ENCODE measurements at regions of chr9 and their contacts with region 1.

Region 1: DNA sequence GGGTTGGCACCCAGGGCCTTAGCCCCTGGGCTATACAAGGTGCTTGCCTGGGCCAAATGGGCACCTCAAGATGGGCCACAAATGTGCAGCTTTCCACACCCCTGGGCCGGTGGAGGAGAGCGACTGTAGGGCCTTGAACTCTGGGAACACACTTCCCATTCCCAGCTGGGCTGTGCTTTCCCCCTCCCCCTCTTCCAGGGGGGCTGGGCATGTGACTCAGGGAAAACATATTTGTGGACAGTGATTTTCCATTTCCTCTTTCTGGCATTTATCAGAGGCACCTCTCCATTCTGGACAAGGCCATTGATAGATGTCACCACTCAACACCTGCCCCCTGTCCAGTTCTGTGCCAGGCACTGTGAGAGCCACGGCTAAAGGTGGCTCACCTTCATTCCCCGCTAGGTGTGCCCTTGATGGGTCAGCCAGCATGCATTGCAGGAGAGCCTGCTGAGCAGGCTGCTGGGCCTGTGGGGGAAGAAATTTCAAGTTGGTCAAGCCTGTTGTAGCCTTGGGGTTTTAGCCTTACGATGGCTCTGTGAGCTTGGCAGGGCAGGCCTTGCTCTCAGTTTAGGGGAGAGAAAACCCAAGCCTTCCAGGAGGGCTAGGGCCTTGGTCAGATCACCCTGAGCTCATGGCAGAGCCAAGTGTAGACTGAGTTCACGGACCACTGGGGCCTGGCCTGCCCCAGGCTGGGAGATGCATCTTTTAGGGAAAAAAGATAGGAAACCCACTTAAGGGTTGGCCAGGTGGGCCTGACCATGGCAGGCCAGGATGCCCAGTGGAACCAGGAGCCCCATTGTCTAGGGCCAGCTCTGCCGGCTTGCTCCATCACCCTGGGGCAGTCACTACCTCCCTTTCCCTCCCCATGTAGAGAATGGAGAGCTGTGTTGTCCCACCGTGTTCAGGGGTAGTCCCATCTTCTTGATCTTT is 113.9 kb downstream of the DAB2IP start:
- DNase-seq: no peak
- H3K4me3 ChIP-seq: no peak overlapping the region
- H3K27ac ChIP-seq: no peak overlapping the region
- H3K4me1 ChIP-seq: peaks cover 0 to 2% (median 0%) of the 10 kb centered on the region in 4 experiments; a peak in 2 of 7 replicates
- H3K27me3 ChIP-seq: no peaks in the 10 kb centered on the region
- CTCF ChIP-seq: no peak
- EP300 ChIP-seq: no peak
- POLR2A ChIP-seq: no peak
- RAD21 ChIP-seq: no peak

Region 2: GRCh38 chr9:121750715-121751623 is 14.3 kb before region 1 on chr9:
- CTCF ChIA-PET with region 1: interaction called, 15 read pairs
- POLR2A ChIA-PET with region 1: no interaction called
- DNase-seq: no peak
- H3K4me3 ChIP-seq: no peak overlapping the region
- H3K27ac ChIP-seq: no peak overlapping the region
- H3K4me1 ChIP-seq: no peaks in the 10 kb centered on the region; a peak in 3 of 7 replicates
- H3K27me3 ChIP-seq: no peaks in the 10 kb centered on the region; a peak in 1 of 7 replicates
- CTCF ChIP-seq: no peak
- EP300 ChIP-seq: no peak
- POLR2A ChIP-seq: no peak
- RAD21 ChIP-seq: no peak

Measured in H1 (cell line).